Activated CD8-positive, alpha-beta T cell treated with anti-CD3 and anti-CD28 coated beads for 36 hours (primary cell): ENCODE measurements at regions of chr5 and their contacts with region 1.

Region 1: DNA sequence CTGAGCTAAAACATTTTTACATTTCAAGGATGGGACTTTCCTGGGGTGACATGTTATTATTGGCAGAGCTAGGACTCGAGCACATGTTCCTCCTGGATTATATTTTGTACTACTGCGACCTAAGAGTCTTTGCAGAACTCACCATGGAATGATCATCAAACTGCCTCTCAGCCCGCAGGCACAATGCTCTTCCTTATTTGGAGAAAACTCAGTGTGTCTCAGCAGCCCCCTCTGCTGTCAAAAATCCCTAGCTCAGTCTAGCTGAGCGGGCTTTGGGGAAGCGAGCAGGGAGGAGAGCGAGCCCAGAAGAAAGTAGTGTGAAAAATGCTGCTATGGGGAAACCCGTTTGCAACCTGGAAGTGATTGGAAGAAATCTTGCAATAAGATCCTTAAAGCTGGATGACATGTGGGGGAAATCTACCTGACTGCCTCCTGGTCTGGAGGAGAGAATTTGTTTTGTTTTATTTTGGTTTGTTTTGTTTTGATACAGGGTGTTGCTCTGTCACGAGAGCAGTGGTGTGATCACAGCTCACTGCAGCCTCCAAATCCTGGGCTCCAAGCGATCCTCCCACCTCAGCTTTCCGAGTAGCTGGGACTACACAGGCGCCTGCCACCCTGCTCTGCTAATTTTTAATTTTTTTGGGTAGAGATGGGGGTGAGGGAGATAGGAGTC is 89.9 kb upstream of the CLINT1 start:
- DNase-seq: peak; percentile 90
- ATAC-seq: peak; percentile 96
- H3K4me3 Mint-ChIP-seq: no peak overlapping the region
- H3K27ac Mint-ChIP-seq: no peak overlapping the region
- H3K4me1 Mint-ChIP-seq: peaks cover 4% of the 10 kb centered on the region
- H3K27me3 Mint-ChIP-seq: peaks cover 6% of the 10 kb centered on the region
- CTCF ChIP-seq: peak; percentile 77

Region 2: DNA sequence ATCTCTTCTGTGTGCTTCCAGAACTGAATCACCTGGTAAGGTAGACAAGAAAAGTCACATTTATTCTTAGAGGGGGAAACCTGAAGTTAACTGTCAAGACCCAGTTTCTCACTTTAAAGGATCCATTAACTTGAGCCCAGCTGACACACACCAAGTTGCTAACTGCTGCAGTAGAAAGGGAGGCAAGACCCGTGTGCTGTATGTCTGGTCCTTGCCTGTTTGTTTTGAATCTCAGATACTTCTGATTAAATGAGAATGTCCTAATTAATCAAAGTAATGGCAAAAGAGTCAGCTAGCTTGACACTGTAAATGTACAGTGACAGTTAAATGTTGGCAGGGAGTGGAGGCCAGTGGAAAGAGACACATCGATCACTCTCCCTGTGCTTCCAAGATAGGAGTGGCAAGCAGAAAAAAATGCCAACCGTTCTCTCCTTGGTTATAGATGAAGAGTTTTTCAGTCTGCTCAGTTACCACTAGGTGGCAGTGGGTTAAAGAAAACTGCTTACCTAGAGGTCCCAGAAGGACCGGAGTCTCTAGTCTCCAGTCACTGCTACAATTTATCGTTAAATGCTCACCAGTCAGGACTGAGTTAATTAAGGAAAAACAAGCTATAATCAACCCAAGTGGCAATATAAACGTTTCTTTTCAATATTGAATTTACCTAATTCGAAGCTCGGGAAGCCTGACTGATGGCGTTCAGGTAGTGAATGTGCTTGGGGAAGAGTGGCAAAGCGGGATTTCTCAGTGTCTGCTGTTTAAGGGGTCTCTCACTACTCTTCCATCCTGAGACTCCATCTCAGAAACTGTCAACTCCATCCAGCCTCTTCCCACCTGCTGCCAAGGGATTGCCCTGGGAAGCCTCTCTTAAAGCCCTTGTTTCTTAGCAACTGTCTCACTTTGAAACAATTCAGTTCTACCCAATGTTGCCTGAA is 186.9 kb before region 1 on chr5:
- CTCF ChIA-PET with region 1: interaction called, 53 read pairs
- POLR2A ChIA-PET with region 1: no interaction called
- intact Hi-C with region 1: loop called (anchors 5 kb)
- DNase-seq: peak; percentile 25
- ATAC-seq: peak; percentile 88
- H3K4me3 Mint-ChIP-seq: no peak overlapping the region
- H3K27ac Mint-ChIP-seq: no peak overlapping the region
- H3K4me1 Mint-ChIP-seq: peaks cover 4% of the 10 kb centered on the region
- H3K27me3 Mint-ChIP-seq: no peaks in the 10 kb centered on the region
- CTCF ChIP-seq: peak; percentile 82

Region 3: DNA sequence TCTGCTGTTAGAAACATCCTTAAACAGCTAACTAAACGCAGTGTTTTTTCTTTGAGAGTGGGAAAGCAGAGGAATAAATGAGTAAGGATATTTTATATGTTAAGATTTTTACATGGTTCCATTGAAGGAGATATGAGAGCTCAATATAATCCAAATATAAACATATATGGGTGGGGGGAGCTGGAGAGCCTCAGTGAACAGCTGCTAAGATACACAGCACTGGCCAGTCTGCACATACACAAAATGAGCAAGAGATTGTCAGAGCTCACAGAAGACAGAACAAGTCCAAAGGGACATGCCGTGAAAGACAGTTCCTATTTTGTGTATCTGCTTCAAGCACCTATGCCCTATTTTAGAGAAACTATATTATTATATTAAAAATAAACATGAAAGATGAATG is 136.8 kb before region 1 on chr5:
- CTCF ChIA-PET with region 1: interaction called, 80 read pairs
- POLR2A ChIA-PET with region 1: no interaction called
- intact Hi-C with region 1: loop called (anchors 1 kb)
- DNase-seq: no peak
- ATAC-seq: no peak
- H3K4me3 Mint-ChIP-seq: no peak overlapping the region
- H3K27ac Mint-ChIP-seq: no peak overlapping the region
- H3K4me1 Mint-ChIP-seq: peaks cover under 1% of the 10 kb centered on the region
- H3K27me3 Mint-ChIP-seq: no peaks in the 10 kb centered on the region
- CTCF ChIP-seq: no peak

Region 4: GRCh38 chr5:157827423-157827822 is 121.5 kb before region 1 on chr5:
- CTCF ChIA-PET with region 1: interaction called, 14 read pairs
- POLR2A ChIA-PET with region 1: no interaction called
- intact Hi-C with region 1: no loop called
- DNase-seq: no peak
- ATAC-seq: no peak
- H3K4me3 Mint-ChIP-seq: no peak overlapping the region
- H3K27ac Mint-ChIP-seq: no peak overlapping the region
- H3K4me1 Mint-ChIP-seq: peaks cover 54% of the 10 kb centered on the region
- H3K27me3 Mint-ChIP-seq: no peaks in the 10 kb centered on the region
- CTCF ChIP-seq: no peak

Region 5: GRCh38 chr5:157917899-157918809 is 30.7 kb before region 1 on chr5:
- CTCF ChIA-PET with region 1: interaction called, 20 read pairs
- POLR2A ChIA-PET with region 1: no interaction called
- intact Hi-C with region 1: no loop called
- DNase-seq: peak; percentile 87
- ATAC-seq: peak; percentile 75
- H3K4me3 Mint-ChIP-seq: no peak overlapping the region
- H3K27ac Mint-ChIP-seq: no peak overlapping the region
- H3K4me1 Mint-ChIP-seq: peaks cover 26% of the 10 kb centered on the region
- H3K27me3 Mint-ChIP-seq: no peaks in the 10 kb centered on the region
- CTCF ChIP-seq: peak; percentile 74

Region 6: GRCh38 chr5:158054223-158055110 is 105.6 kb after region 1 on chr5:
- CTCF ChIA-PET with region 1: no interaction called
- POLR2A ChIA-PET with region 1: no interaction called
- intact Hi-C with region 1: no loop called
- DNase-seq: no peak
- ATAC-seq: no peak
- H3K4me3 Mint-ChIP-seq: no peak overlapping the region
- H3K27ac Mint-ChIP-seq: no peak overlapping the region
- H3K4me1 Mint-ChIP-seq: no peaks in the 10 kb centered on the region
- H3K27me3 Mint-ChIP-seq: peaks cover 9% of the 10 kb centered on the region
- CTCF ChIP-seq: no peak